B cell (primary cell): ENCODE measurements at regions of chr6 and their contacts with region 1.

Region 1: GRCh38 chr6:149335924-149336608 is 18.6 kb downstream of the TAB2 start:
- DNase-seq: no peak
- ATAC-seq: no peak
- H3K4me3 ChIP-seq: no peak overlapping the region
- H3K4me3 Mint-ChIP-seq: peak overlapping the region; percentile 27
- H3K27ac ChIP-seq: no peak overlapping the region
- H3K27ac Mint-ChIP-seq: no peak overlapping the region
- H3K4me1 ChIP-seq: peaks cover 26 to 64% of the 10 kb centered on the region in 2 donors
- H3K4me1 Mint-ChIP-seq: peaks cover 76% of the 10 kb centered on the region
- H3K27me3 ChIP-seq: no peaks in the 10 kb centered on the region
- H3K27me3 Mint-ChIP-seq: no peaks in the 10 kb centered on the region
- CTCF ChIP-seq: no peak

Region 2: DNA sequence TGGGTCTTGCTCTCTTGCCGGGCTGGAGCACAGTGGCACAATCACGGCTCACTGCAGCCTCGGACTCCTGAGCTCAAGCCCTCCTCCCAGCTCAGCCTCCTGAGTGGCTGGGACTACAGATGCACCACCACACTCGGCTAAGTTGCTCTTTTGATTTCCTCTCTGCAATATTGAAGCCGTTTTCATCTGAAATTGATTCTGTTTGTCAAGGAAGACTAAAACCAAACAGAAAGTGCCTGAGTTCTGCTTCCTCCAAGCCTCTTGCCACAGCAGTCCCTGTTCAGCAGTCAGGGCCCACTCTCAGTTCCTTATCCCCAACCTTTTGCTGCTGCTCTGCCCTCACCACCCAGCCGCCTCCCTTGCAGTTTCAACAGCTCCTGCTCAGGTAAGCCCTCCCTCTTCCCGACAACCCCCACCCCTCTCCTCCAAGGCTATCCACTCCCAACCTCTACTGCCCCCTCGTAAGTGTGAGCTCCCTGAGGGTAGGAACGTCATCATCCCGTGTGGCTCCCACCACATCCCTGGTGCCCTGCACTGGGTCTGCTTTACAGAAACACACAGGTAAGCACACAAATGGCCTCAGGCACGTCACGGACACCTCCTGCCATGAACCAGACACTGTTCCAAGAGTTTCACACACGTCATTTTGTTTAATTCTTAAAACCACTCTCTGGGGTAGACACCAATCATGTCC is 89.2 kb before region 1 on chr6:
- CTCF ChIA-PET with region 1: no interaction called
- POLR2A ChIA-PET with region 1: no interaction called
- intact Hi-C with region 1: no loop called
- DNase-seq: peak; percentile 76
- ATAC-seq: peak; percentile 97
- H3K4me3 ChIP-seq: peak overlapping the region in 4 of 5 experiments; percentile 4 to 64 (median 42)
- H3K4me3 Mint-ChIP-seq: peak overlapping the region; percentile 79
- H3K27ac ChIP-seq: peak overlapping the region; percentile 48 to 71
- H3K27ac Mint-ChIP-seq: peak overlapping the region; percentile 89
- H3K4me1 ChIP-seq: peaks cover 32 to 33% of the 10 kb centered on the region in 2 donors
- H3K4me1 Mint-ChIP-seq: peaks cover 52% of the 10 kb centered on the region
- H3K27me3 ChIP-seq: no peaks in the 10 kb centered on the region
- H3K27me3 Mint-ChIP-seq: no peaks in the 10 kb centered on the region
- CTCF ChIP-seq: no peak

Region 3: DNA sequence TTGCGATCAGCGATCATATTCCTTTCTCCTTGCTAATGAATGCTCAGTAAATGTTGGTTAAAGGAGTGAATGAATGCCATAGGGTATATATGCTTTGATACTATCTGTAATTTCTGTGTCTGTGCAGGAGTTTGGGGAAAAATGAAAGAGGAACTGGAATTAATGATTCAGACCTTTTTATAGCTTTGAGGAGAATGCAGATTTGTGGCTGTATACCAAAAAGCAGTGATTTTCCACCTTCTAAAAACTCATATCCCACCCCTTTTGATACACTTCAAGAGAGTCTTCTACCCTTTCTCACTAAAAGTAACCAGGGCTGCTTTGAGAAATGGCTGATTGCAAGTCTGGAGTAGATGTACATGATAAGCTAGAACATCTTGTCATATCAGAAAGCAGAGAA is 37.4 kb after region 1 on chr6:
- CTCF ChIA-PET with region 1: no interaction called
- POLR2A ChIA-PET with region 1: no interaction called
- intact Hi-C with region 1: loop called (anchors 5 kb)
- DNase-seq: no peak
- ATAC-seq: peak; percentile 21
- H3K4me3 ChIP-seq: no peak overlapping the region
- H3K4me3 Mint-ChIP-seq: peak overlapping the region; percentile 11
- H3K27ac ChIP-seq: no peak overlapping the region
- H3K27ac Mint-ChIP-seq: peak overlapping the region; percentile 8
- H3K4me1 ChIP-seq: peaks cover 22 to 24% of the 10 kb centered on the region in 2 donors
- H3K4me1 Mint-ChIP-seq: peaks cover 38% of the 10 kb centered on the region
- H3K27me3 ChIP-seq: no peaks in the 10 kb centered on the region
- H3K27me3 Mint-ChIP-seq: no peaks in the 10 kb centered on the region
- CTCF ChIP-seq: no peak